ENCODE measurements at regions of chr1 and their contacts with region 1.

Region 1: GRCh38 chr1:44213222-44214112 is at the start of gene DMAP1:
- DNase-seq: peak; percentile 75 to 89 (median 83)
- ATAC-seq: peak; percentile 93
- H3K4me3 ChIP-seq: peak within 1 kb of the TSS; percentile 93
- H3K4me3 Mint-ChIP-seq: peak within 1 kb of the TSS; percentile 85 to 97 (median 94)
- H3K27ac ChIP-seq: peak within 1 kb of the TSS; percentile 78
- H3K27ac Mint-ChIP-seq: peak within 1 kb of the TSS; percentile 86 to 97 (median 95)
- H3K4me1 ChIP-seq: peaks cover 9 to 17% of the 10 kb centered on the region in 2 donors
- H3K4me1 Mint-ChIP-seq: peaks cover 18 to 61% (median 49%) of the 10 kb centered on the region in 7 donors
- H3K27me3 ChIP-seq: no peaks in the 10 kb centered on the region
- H3K27me3 Mint-ChIP-seq: peaks cover 0 to 4% (median 0%) of the 10 kb centered on the region in 5 donors
- total RNA-seq, gene DMAP1: 46.3 to 96.2 (median 66.7) TPM

Region 2: DNA sequence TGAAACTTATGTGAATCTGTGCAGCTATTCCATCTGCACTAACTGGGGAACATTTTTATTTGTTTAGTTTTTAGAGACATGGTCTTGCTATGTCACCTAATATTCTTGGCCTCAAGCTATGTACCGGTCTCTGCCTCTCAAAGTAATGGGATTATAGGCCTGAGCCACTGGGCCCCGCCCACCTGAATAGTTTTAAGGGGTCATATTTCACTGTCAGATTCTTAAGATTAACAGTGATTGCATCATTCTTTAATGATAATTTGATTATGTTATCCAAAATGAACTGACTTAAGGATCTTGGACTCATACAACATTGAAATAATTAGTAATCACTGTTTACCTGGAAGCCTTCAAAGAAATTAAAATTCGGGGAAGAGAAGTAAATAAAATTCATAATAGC is 59.4 kb before region 1 on chr1:
- CTCF ChIA-PET with region 1: no interaction called
- POLR2A ChIA-PET with region 1: no interaction called
- intact Hi-C with region 1: no loop called
- DNase-seq: no peak
- ATAC-seq: no peak
- H3K4me3 ChIP-seq: no peak overlapping the region
- H3K4me3 Mint-ChIP-seq: no peak overlapping the region
- H3K27ac ChIP-seq: no peak overlapping the region
- H3K27ac Mint-ChIP-seq: no peak overlapping the region
- H3K4me1 ChIP-seq: no peaks in the 10 kb centered on the region
- H3K4me1 Mint-ChIP-seq: no peaks in the 10 kb centered on the region
- H3K27me3 ChIP-seq: no peaks in the 10 kb centered on the region
- H3K27me3 Mint-ChIP-seq: peaks cover 12 to 26% (median 18%) of the 10 kb centered on the region in 5 donors

Region 3: GRCh38 chr1:44237721-44238457 is 24.4 kb after region 1 on chr1:
- CTCF ChIA-PET with region 1: interaction called, 4 read pairs
- POLR2A ChIA-PET with region 1: interaction called, 3 read pairs
- intact Hi-C with region 1: loop called in 1 of 2 experiments (anchors 2 kb)
- DNase-seq: peak; percentile 25 to 51 (median 33)
- ATAC-seq: peak; percentile 95
- H3K4me3 ChIP-seq: no peak overlapping the region
- H3K4me3 Mint-ChIP-seq: peak overlapping the region in 2 of 10 donors; percentile 31 to 43
- H3K27ac ChIP-seq: no peak overlapping the region
- H3K27ac Mint-ChIP-seq: peak overlapping the region in 3 of 9 donors; percentile 52 to 65 (median 57)
- H3K4me1 ChIP-seq: peaks cover 0 to 7% of the 10 kb centered on the region in 2 donors
- H3K4me1 Mint-ChIP-seq: peaks cover 9 to 29% (median 13%) of the 10 kb centered on the region in 7 donors
- H3K27me3 ChIP-seq: no peaks in the 10 kb centered on the region
- H3K27me3 Mint-ChIP-seq: no peaks in the 10 kb centered on the region

Region 4: GRCh38 chr1:44354840-44355581 is 141.5 kb after region 1 on chr1 and contains the start of gene ERI3:
- CTCF ChIA-PET with region 1: no interaction called
- POLR2A ChIA-PET with region 1: no interaction called
- intact Hi-C with region 1: loop called (anchors 1 to 2 kb)
- DNase-seq: peak; percentile 91 to 97 (median 95)
- ATAC-seq: peak; percentile 100
- H3K4me3 ChIP-seq: peak within 1 kb of the TSS; percentile 83
- H3K4me3 Mint-ChIP-seq: peak within 1 kb of the TSS; percentile 83 to 98 (median 96)
- H3K27ac ChIP-seq: peak within 1 kb of the TSS; percentile 82
- H3K27ac Mint-ChIP-seq: peak within 1 kb of the TSS; percentile 87 to 94 (median 90)
- H3K4me1 ChIP-seq: peaks cover 11 to 12% of the 10 kb centered on the region in 2 donors
- H3K4me1 Mint-ChIP-seq: peaks cover 15 to 52% (median 46%) of the 10 kb centered on the region in 7 donors
- H3K27me3 ChIP-seq: no peaks in the 10 kb centered on the region
- H3K27me3 Mint-ChIP-seq: no peaks in the 10 kb centered on the region
- total RNA-seq, gene ERI3: 28.7 to 37.7 (median 36.2) TPM

Region 5: DNA sequence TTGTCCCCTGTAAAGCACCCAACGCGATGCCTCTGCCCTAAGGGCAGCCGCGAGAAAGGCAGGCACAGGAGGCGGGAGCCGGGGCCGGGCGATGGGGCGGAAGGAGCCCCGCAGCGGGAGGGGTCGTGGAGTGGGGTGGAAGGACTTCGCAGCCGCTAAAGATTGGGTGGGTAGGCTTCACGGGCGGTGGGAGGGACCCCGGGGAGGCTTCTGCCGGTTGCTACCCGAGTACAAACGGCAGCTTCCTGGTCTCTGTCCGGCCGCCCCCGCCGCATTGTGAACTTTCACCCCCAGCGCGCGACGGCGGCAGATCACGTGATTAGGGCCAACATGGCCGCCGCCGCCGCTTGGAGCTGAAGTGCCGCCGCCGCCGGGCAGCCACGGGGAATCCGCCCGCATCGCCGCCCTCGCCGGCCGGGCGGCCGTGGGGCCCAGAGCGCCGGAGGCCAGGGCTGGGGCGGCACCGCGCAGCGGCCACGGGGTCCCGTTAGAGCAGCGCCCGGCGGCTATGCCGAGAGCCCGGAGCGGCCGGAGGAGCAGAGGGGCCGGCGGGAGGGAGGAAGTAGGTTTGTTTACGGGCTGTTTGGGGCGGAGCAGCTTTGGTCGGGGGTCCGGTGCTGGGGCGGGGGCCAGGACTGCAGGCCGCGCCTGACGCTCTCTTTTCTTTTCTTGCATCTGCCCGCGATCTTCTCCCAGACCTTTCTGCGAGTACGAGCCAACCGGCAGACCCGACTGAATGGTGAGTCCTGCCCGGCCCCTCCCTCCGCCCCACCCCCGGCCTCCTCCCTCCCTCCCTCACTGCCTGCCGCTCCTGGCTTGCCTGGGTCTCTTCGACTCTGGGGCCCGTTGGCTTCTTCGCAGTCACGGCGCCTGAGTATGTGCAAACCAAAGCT is 418.4 kb after region 1 on chr1:
- CTCF ChIA-PET with region 1: interaction called, 3 read pairs
- POLR2A ChIA-PET with region 1: interaction called, 6 read pairs
- intact Hi-C with region 1: loop called in 1 of 2 experiments (anchors 10 kb)
- DNase-seq: peak; percentile 80 to 92 (median 87)
- ATAC-seq: peak; percentile 87
- H3K4me3 ChIP-seq: peak overlapping the region; percentile 70
- H3K4me3 Mint-ChIP-seq: peak overlapping the region; percentile 69 to 95 (median 90)
- H3K27ac ChIP-seq: peak overlapping the region; percentile 85
- H3K27ac Mint-ChIP-seq: peak overlapping the region; percentile 46 to 99 (median 97)
- H3K4me1 ChIP-seq: peaks cover 8 to 13% of the 10 kb centered on the region in 2 donors
- H3K4me1 Mint-ChIP-seq: peaks cover 26 to 50% (median 39%) of the 10 kb centered on the region in 7 donors
- H3K27me3 ChIP-seq: no peaks in the 10 kb centered on the region
- H3K27me3 Mint-ChIP-seq: no peaks in the 10 kb centered on the region